AG04449 (cell line): ENCODE measurements at regions of chr7 and their contacts with region 1.

Region 1: GRCh38 chr7:16668049-16668858 is 22.3 kb downstream of the BZW2 start:
- DNase-seq: peak; percentile 99
- H3K4me3 ChIP-seq: no peak overlapping the region
- CTCF ChIP-seq: peak; percentile 21

Region 2: DNA sequence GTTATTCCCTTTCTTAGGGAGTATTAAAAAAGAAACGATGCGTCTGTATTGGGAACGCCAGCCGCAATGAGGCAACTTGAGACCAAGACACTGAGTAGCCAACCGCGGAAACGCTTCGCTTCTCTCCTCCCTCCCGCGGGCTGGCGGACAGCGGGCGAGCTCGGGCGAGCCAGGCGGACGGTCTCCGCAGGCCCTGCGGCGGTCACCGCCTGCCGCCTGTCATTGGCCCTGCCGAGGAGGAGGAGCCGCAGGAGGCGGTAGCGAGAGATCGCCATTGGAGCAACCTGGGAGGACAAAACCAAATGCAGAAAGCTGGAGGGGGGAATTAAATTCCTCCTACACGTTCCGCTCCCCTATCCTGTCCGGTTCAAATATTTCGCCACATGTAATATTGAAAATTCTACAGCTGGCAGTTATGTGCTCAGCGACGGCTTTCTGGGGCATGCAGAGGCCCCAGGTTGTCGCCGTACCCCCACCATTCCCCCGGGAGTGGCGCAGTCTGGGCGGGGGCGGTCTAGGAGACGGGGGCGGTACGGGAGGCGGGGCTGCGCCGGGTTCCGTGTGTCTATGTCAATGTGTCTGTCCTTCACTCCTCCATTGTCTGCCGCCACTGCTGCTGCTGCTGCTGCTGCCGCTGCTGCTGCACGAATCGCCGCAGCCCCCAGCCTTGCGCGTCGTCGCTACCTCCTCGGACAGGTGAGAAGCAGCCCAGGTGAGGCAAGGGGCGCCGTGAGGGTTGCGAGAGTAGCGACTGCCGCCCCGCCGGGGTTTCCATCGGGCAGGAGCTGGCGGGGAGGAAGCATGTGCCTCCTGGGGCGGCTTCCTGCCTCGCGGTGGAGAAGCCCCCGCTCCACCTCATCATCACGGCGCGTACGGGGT is 22.4 kb before region 1 on chr7 and contains the starts of genes ANKMY2 and BZW2:
- CTCF ChIA-PET with region 1: interaction called, 3 read pairs
- POLR2A ChIA-PET with region 1: interaction called, 10 read pairs
- DNase-seq: no peak
- H3K4me3 ChIP-seq: peak within 1 kb of the TSS; percentile 97
- CTCF ChIP-seq: no peak